ENCODE measurements at regions of chr5 and their contacts with region 1.

Region 1: GRCh38 chr5:177370488-177371119 is 12.9 kb downstream of the RGS14 start:
- DNase-seq: peak in 3 of 5 donors; percentile 65 to 81 (median 79)
- H3K4me3 ChIP-seq: no peak overlapping the region
- H3K4me3 Mint-ChIP-seq: peak overlapping the region in 5 of 8 donors; percentile 15 to 80 (median 61)
- H3K27ac ChIP-seq: peak overlapping the region; percentile 28
- H3K27ac Mint-ChIP-seq: peak overlapping the region in 4 of 7 donors; percentile 64 to 88 (median 70)
- H3K4me1 ChIP-seq: peaks cover 85% of the 10 kb centered on the region
- H3K4me1 Mint-ChIP-seq: peaks cover 47 to 78% (median 62%) of the 10 kb centered on the region in 4 donors
- H3K27me3 ChIP-seq: no peaks in the 10 kb centered on the region
- H3K27me3 Mint-ChIP-seq: no peaks in the 10 kb centered on the region

Region 2: GRCh38 chr5:177311723-177312648 is 58.6 kb before region 1 on chr5 and contains the start of gene MXD3:
- CTCF ChIA-PET with region 1: interaction called, 20 read pairs
- POLR2A ChIA-PET with region 1: interaction called, 8 read pairs
- intact Hi-C with region 1: no loop called
- DNase-seq: peak; percentile 90 to 96 (median 93)
- H3K4me3 ChIP-seq: peak within 1 kb of the TSS; percentile 24 to 64
- H3K4me3 Mint-ChIP-seq: peak within 1 kb of the TSS; percentile 70 to 86 (median 80)
- H3K27ac ChIP-seq: peak within 1 kb of the TSS; percentile 49
- H3K27ac Mint-ChIP-seq: peak within 1 kb of the TSS; percentile 29 to 83 (median 75)
- H3K4me1 ChIP-seq: peaks cover 41% of the 10 kb centered on the region
- H3K4me1 Mint-ChIP-seq: peaks cover 17 to 49% (median 30%) of the 10 kb centered on the region in 4 donors
- H3K27me3 ChIP-seq: no peaks in the 10 kb centered on the region
- H3K27me3 Mint-ChIP-seq: no peaks in the 10 kb centered on the region
- total RNA-seq, gene MXD3: 17.3 TPM

Region 3: GRCh38 chr5:177317959-177318377 is 52.6 kb before region 1 on chr5:
- CTCF ChIA-PET with region 1: interaction called, 12 read pairs
- POLR2A ChIA-PET with region 1: interaction called, 4 read pairs
- intact Hi-C with region 1: no loop called
- DNase-seq: peak; percentile 68 to 73 (median 69)
- H3K4me3 ChIP-seq: no peak overlapping the region
- H3K4me3 Mint-ChIP-seq: no peak overlapping the region
- H3K27ac ChIP-seq: no peak overlapping the region
- H3K27ac Mint-ChIP-seq: peak overlapping the region in 2 of 7 donors; percentile 10 to 34
- H3K4me1 ChIP-seq: peaks cover 15% of the 10 kb centered on the region
- H3K4me1 Mint-ChIP-seq: peaks cover 8 to 36% (median 20%) of the 10 kb centered on the region in 4 donors
- H3K27me3 ChIP-seq: no peaks in the 10 kb centered on the region
- H3K27me3 Mint-ChIP-seq: no peaks in the 10 kb centered on the region

Region 4: DNA sequence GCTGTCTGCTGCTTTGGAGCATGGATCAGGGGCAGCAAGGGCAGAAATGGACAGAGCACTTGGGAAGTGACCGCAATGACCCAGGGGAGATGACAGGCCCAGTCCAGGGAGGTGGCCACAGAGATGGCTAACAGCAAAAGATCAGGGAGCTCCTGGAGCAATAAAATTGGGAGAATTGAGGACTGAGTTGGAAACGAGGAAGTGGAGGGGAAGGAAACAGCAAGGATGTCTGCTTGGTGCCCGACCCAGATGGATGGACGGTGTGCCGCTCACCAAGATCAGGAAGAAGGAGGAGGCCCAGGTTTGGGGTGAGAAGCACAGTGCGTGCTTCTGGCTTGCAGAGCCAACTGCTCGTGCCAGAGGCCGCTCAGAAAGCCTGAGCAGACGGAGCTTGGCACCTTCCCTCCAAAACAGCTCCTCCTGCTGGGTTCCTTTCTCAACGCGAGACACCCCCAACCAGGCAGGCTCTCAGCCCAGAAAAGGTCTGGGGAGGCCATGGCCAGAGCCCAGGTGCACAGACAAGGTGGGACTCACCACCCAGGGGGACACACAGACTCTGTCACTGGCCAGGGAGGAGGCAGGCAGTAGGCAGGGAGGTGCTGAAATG is 11.9 kb after region 1 on chr5:
- CTCF ChIA-PET with region 1: interaction called, 140 read pairs
- POLR2A ChIA-PET with region 1: interaction called, 14 read pairs
- intact Hi-C with region 1: no loop called
- DNase-seq: peak in 1 of 5 donors; percentile 23
- H3K4me3 ChIP-seq: no peak overlapping the region
- H3K4me3 Mint-ChIP-seq: no peak overlapping the region
- H3K27ac ChIP-seq: no peak overlapping the region
- H3K27ac Mint-ChIP-seq: peak overlapping the region in 3 of 7 donors; percentile 42 to 90 (median 76)
- H3K4me1 ChIP-seq: peaks cover 28% of the 10 kb centered on the region
- H3K4me1 Mint-ChIP-seq: peaks cover 11 to 58% (median 20%) of the 10 kb centered on the region in 4 donors
- H3K27me3 ChIP-seq: no peaks in the 10 kb centered on the region
- H3K27me3 Mint-ChIP-seq: no peaks in the 10 kb centered on the region

Region 5: GRCh38 chr5:177446200-177447065 is 75.8 kb after region 1 on chr5 and contains the start of gene PRR7:
- CTCF ChIA-PET with region 1: no interaction called
- POLR2A ChIA-PET with region 1: interaction called, 23 read pairs
- intact Hi-C with region 1: no loop called
- DNase-seq: peak; percentile 77 to 85 (median 82)
- H3K4me3 ChIP-seq: peak within 1 kb of the TSS in 1 of 2 donors; percentile 50
- H3K4me3 Mint-ChIP-seq: peak within 1 kb of the TSS; percentile 81 to 90 (median 85)
- H3K27ac ChIP-seq: peak within 1 kb of the TSS; percentile 94
- H3K27ac Mint-ChIP-seq: peak within 1 kb of the TSS; percentile 95 to 99 (median 97)
- H3K4me1 ChIP-seq: peaks cover 51% of the 10 kb centered on the region
- H3K4me1 Mint-ChIP-seq: peaks cover 25 to 53% (median 41%) of the 10 kb centered on the region in 4 donors
- H3K27me3 ChIP-seq: no peaks in the 10 kb centered on the region
- H3K27me3 Mint-ChIP-seq: no peaks in the 10 kb centered on the region
- total RNA-seq, gene PRR7: 5.2 to 7.2 TPM

Region 6: DNA sequence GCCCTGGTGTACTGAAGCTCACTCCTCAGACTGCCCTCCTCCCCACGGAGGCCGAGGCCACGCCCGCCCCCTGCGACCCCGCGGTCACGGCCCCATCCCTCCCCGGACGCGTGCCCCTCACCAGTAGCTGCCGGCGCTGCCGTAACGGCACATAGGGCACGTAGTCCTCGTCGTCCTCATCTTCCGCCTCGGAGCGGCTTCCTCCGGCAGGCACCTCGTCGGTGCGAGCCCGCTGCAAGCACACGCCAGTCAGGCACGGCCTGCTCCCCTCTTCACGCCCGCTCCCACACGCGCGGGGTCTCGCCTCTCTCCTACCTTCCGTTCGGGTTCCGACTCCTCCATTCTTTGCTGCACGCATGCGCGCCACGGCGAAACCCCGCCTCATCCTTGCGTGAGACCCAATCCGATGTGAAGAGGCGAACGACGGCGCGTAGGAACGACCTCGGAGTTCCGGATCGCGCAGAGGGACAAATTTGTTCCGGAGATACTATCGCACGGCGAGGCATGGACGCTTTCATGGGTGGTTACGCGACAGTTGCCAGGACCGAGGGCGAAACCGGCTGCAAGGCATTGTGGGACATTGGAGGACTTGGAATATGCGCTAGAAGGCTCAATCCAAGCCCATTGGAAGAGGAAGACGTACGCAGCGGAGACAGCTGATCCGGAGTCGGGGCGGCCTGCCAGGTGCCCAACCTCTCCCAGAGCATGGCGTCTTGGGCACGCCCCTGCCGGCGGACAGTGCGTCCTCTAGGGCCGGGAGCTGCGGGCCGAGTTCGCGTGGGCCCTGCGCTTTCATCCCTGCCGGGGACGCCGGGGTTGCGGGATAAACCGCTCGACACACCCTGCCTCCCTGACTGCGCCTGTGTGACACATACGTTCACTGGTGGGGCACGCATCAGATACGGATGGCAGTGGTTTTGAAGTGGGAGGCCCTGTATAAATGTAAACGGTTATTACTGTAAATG is 146.3 kb after region 1 on chr5 and contains the start of gene DDX41:
- CTCF ChIA-PET with region 1: no interaction called
- POLR2A ChIA-PET with region 1: no interaction called
- intact Hi-C with region 1: no loop called
- DNase-seq: peak; percentile 95 to 97 (median 95)
- H3K4me3 ChIP-seq: peak within 1 kb of the TSS; percentile 88 to 93
- H3K4me3 Mint-ChIP-seq: peak within 1 kb of the TSS; percentile 93 to 100 (median 96)
- H3K27ac ChIP-seq: peak within 1 kb of the TSS; percentile 71
- H3K27ac Mint-ChIP-seq: peak within 1 kb of the TSS; percentile 82 to 99 (median 95)
- H3K4me1 ChIP-seq: peaks cover 37% of the 10 kb centered on the region
- H3K4me1 Mint-ChIP-seq: peaks cover 31 to 62% (median 43%) of the 10 kb centered on the region in 4 donors
- H3K27me3 ChIP-seq: no peaks in the 10 kb centered on the region
- H3K27me3 Mint-ChIP-seq: no peaks in the 10 kb centered on the region
- total RNA-seq, gene DDX41: 72.9 to 80.3 TPM